ENCODE measurements at regions of chr17 and their contacts with region 1.

Region 1: DNA sequence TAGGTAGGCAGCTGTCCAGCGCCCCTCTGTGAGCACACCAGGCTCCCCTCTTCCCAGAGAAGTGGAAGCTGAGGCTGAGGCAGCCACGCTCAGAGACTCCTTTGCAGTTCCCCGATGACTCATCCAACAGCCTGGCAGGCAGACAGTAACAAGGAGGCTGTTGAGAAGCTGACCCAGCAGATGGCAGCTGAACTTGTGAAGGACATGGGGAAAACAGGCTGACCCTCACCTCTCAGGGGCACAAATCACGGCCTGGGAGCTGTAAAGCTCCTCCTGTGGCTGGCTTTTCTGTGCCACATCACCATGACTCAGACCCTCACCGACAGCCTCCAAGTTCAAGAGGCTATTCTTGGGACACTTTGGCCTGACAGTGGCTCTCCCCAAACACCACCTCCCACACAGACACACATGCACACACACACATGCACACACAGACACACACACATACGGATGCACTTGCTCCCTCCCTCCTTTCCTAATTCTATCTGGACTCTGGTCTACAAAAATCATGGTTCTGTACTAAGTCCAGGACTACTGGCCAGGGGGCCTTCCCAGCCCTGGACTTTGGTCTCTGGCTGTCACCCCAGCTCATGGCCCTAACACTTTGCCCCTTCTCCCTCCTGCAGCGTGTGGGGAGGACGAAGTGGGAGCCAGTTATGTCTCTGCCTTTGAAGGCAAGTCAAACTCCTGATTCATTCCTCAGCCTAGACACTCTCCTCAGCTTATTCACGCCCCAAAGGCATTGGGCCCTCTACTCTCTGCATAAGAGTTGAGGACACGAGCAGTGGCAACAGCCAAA is 23.2 kb downstream of the MAP3K14 start:
- DNase-seq: peak; percentile 95
- H3K4me3 Mint-ChIP-seq: peak overlapping the region; percentile 23
- H3K27ac Mint-ChIP-seq: peak overlapping the region; percentile 68
- H3K4me1 Mint-ChIP-seq: peaks cover 50% of the 10 kb centered on the region
- H3K27me3 Mint-ChIP-seq: no peaks in the 10 kb centered on the region
- CTCF ChIP-seq: no peak

Region 2: DNA sequence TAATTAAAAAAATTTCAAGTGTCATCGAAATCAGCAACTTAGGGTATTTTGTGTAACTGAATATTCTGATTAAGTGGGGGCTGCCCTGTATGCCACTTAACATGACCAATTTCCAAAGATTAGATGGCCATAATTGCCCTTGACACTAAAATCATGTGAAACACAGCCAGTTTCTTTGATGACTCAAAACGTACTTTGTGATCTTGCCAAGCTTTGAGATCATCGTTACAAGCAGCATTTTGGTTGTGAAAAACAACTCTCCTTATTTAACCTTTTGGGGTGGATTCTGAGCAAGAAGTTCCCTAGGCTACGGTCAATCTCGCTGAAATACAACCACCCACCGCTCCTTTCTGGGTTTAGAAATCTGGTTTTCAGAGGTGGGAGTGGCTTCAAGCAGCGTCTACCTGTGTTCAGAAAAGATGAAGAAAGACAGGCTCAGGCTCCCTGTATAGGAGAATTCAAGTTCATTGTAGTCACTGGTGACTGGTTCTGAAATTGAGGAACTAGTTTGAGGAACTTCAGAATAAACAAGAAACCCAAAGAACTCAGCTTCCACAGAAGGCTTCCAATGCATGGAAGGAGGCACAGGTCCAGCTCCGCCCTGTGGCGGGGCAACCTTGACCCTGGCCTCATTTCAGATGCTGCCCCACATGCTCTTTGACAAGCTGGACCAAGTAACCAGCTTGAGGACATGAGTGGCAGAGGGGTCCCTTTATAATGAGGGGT is 13.8 kb after region 1 on chr17:
- CTCF ChIA-PET with region 1: interaction called, 34 read pairs
- POLR2A ChIA-PET with region 1: interaction called, 64 read pairs
- intact Hi-C with region 1: no loop called
- DNase-seq: peak; percentile 88
- H3K4me3 Mint-ChIP-seq: peak overlapping the region; percentile 32
- H3K27ac Mint-ChIP-seq: peak overlapping the region; percentile 90
- H3K4me1 Mint-ChIP-seq: peaks cover 21% of the 10 kb centered on the region
- H3K27me3 Mint-ChIP-seq: no peaks in the 10 kb centered on the region
- CTCF ChIP-seq: no peak

Region 3: GRCh38 chr17:45341533-45342158 is 48.0 kb after region 1 on chr17:
- CTCF ChIA-PET with region 1: no interaction called
- POLR2A ChIA-PET with region 1: no interaction called
- intact Hi-C with region 1: no loop called
- DNase-seq: peak; percentile 70
- H3K4me3 Mint-ChIP-seq: no peak overlapping the region
- H3K27ac Mint-ChIP-seq: no peak overlapping the region
- H3K4me1 Mint-ChIP-seq: peaks cover 8% of the 10 kb centered on the region
- H3K27me3 Mint-ChIP-seq: no peaks in the 10 kb centered on the region
- CTCF ChIP-seq: no peak

Region 4: DNA sequence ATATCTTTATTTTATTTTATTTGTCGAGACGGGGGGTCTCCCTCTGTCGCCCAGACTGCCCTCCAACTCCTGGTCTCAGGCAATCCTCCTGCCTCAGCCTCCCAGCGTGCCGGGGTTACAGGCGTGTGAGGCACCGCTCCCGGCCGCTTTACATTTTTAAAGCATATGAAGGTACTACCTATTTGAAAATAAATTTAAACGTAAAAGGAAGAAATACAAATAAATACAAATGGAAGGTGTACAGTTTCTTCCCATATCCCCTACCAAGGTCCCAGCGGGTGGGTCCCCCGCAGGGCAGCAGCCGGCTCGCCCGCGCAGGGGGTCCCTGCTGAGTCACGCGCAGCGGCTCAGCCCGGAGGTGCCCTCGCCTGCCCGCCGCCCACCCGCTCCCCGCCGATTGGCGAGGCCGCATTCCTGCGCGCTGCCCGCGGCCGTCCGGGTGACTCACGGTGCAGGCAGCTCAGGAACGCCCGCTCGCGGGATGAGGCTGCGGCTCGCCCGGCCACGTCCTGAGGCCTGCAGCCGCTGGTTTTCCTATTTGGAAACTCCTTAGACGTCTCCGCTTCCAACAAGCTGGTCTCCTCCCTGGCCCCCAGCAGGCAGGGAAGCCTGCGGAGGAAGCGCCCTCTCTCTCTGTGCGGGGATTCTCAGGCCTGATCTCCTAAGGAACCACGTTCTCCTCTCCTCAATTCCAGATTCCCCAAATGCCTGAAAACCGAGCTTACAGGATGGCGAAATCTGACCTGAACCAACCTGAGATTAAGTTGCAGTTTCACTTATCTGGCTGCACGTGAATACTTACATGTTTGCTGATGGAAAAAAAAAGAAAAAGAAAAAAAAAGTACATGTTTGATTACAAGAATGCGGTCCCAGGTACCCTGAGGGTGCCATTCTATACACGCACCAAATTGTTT is 78.1 kb after region 1 on chr17:
- CTCF ChIA-PET with region 1: interaction called, 10 read pairs
- POLR2A ChIA-PET with region 1: interaction called, 38 read pairs
- intact Hi-C with region 1: loop called (anchors 5 kb)
- DNase-seq: peak; percentile 95
- H3K4me3 Mint-ChIP-seq: peak overlapping the region; percentile 83
- H3K27ac Mint-ChIP-seq: peak overlapping the region; percentile 95
- H3K4me1 Mint-ChIP-seq: peaks cover 35% of the 10 kb centered on the region
- H3K27me3 Mint-ChIP-seq: no peaks in the 10 kb centered on the region
- CTCF ChIP-seq: no peak

Measured in MCF 10A (cell line).